ENCODE measurements at regions of chr6 and their contacts with region 1.

Region 1: DNA sequence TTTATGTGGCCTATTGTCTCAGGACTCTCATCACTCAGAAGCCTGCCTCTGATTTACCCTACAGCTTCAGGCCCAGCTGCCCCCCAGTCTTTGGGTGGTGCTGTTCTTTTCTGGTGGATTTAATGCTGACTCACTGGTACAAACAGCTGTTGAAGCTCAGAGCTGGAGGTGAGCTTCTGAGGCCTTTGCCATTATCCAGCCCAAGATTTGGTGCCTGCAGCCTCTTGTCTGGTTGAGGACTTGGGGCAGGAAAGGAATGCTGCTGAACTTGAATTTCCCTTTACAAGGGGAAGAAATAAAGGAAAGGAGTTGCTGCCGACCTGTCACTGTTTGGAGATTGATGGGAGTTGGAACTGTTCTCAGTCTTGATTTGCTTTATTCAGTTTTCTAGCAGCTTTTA is 19.8 kb downstream of the ABCF1 start:
- DNase-seq: no peak
- H3K4me3 ChIP-seq: no peak overlapping the region
- H3K4me1 ChIP-seq: no peaks in the 10 kb centered on the region
- H3K27me3 ChIP-seq: no peaks in the 10 kb centered on the region

Region 2: DNA sequence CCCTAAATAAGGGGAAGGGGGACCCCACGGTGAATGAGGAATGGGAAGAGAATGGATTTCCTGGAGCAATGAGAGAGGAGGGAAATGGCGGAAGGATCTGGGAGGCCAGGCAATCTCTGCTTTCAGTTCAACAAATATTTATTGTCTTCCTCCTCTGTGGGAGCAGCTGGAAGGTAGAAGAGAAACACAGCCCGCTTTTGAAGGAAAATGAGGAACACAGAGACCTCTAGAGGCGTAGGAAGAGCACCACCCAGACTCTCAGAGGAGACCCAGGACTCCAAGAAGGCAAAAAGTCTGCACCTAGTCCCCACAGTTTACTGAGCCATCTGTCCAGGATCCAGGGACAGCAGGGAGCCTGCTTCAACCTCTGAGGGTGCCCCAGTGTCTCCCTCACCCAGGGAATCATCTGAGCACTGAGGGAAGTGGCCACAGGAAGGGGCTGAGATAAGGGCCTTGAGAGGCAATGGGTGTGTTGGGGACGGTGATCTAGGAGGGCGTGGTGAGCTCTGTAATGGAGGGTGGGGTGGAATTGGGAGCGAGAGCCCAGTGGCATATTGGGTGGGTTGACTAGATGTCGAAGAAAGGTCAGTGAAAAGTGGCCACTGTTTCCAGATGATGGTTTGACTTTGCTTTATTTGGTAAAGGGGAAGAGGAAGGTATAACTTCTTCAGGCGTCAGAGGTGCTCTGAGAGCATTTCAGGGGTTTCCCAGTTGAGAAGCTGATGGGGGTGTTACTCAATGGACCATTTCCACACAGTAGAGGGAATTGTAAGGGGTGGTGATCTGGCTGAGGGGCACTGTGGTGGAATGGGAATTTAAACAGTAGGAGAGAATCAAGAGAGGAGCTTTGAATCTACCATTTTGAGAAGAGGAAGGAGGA is 524.2 kb after region 1 on chr6:
- in situ Hi-C with region 1: no loop called
- DNase-seq: peak; percentile 29 to 33
- H3K4me3 ChIP-seq: no peak overlapping the region
- H3K4me1 ChIP-seq: no peaks in the 10 kb centered on the region
- H3K27me3 ChIP-seq: peaks cover 4% of the 10 kb centered on the region

Region 3: GRCh38 chr6:31639449-31639861 is 1048.5 kb after region 1 on chr6:
- in situ Hi-C with region 1: loop called (anchors 25 kb)
- DNase-seq: no peak
- H3K4me3 ChIP-seq: no peak overlapping the region
- H3K4me1 ChIP-seq: no peaks in the 10 kb centered on the region
- H3K27me3 ChIP-seq: no peaks in the 10 kb centered on the region

Measured in HAP-1 (cell line).